Transverse colon (tissue), 4 donors: ENCODE measurements at regions of chr16 and their contacts with region 1.

Region 1: GRCh38 chr16:85420501-85421337 is 192.4 kb upstream of the GSE1 start:
- DNase-seq: peak; percentile 75
- H3K4me3 ChIP-seq: no peak overlapping the region
- H3K27ac ChIP-seq: peak overlapping the region in 3 of 4 donors; percentile 43 to 74 (median 52)
- H3K4me1 ChIP-seq: peaks cover 13 to 45% (median 36%) of the 10 kb centered on the region in 4 donors
- H3K27me3 ChIP-seq: no peaks in the 10 kb centered on the region
- CTCF ChIP-seq: peak; percentile 97 to 100 (median 100)
- EP300 ChIP-seq: no peak
- POLR2A ChIP-seq: no peak

Region 2: DNA sequence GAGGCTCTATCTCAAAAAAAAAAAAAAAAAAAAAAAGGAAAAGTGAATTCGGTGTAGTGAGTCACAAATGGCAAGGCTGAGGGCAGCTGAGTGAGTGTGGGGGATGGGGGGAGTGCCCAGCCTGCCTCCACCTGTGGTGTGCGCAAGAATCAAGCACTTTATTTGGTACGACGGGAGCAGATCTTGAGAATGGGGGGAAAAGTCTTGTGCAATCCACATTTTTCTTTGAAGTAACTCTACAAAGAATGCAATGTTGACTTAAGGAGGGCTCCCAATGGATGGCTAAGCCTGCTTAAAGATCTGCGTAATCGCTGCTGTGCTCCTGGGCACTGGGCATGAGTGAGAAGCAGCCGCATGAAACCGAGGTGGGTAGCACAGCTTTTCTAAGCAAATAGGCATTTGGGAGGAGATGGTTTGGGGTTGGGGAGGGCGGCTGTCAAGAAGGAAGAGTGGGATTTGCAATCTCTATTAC is 1024.1 kb before region 1 on chr16:
- in situ Hi-C with region 1: no loop called
- intact Hi-C with region 1: no loop called
- DNase-seq: no peak
- H3K4me3 ChIP-seq: no peak overlapping the region
- H3K27ac ChIP-seq: no peak overlapping the region
- H3K4me1 ChIP-seq: peaks cover 0 to under 1% (median 0%) of the 10 kb centered on the region in 4 donors
- H3K27me3 ChIP-seq: no peaks in the 10 kb centered on the region
- CTCF ChIP-seq: no peak
- EP300 ChIP-seq: no peak
- POLR2A ChIP-seq: no peak

Region 3: GRCh38 chr16:85626191-85626981 is 205.7 kb after region 1 on chr16:
- in situ Hi-C with region 1: loop called in 3 of 4 experiments (anchors 10 to 25 kb)
- intact Hi-C with region 1: no loop called
- DNase-seq: no peak
- H3K4me3 ChIP-seq: no peak overlapping the region
- H3K27ac ChIP-seq: no peak overlapping the region
- H3K4me1 ChIP-seq: peaks cover 4 to 53% (median 16%) of the 10 kb centered on the region in 4 donors
- H3K27me3 ChIP-seq: no peaks in the 10 kb centered on the region
- CTCF ChIP-seq: no peak
- EP300 ChIP-seq: no peak
- POLR2A ChIP-seq: no peak